ENCODE measurements at regions of chr1 and their contacts with region 1.

Region 1: DNA sequence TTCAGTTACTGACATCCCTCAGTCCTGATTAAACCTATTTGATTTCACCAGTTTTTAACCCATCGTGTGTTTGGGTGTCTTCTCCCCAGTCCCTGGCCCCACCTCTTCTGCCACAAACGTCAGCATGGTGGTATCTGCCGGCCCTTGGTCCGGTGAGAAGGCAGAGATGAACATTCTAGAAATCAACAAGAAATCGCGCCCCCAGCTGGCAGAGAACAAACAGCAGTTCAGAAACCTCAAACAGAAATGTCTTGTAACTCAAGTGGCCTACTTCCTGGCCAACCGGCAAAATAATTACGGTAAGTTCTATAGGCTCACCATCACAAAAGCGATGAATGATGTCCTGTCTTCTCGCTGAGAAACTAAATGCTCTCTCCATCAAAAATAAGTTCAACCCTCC is 28.7 kb downstream of the NBPF3 start:
- DNase-seq: peak; percentile 72
- ATAC-seq: no peak
- H3K4me3 Mint-ChIP-seq: no peak overlapping the region
- H3K27ac Mint-ChIP-seq: no peak overlapping the region; the same call in 1 of the 2 replicates
- H3K4me1 Mint-ChIP-seq: peaks cover 52% of the 10 kb centered on the region
- H3K27me3 Mint-ChIP-seq: no peaks in the 10 kb centered on the region
- CTCF ChIP-seq: peak; percentile 58

Region 2: DNA sequence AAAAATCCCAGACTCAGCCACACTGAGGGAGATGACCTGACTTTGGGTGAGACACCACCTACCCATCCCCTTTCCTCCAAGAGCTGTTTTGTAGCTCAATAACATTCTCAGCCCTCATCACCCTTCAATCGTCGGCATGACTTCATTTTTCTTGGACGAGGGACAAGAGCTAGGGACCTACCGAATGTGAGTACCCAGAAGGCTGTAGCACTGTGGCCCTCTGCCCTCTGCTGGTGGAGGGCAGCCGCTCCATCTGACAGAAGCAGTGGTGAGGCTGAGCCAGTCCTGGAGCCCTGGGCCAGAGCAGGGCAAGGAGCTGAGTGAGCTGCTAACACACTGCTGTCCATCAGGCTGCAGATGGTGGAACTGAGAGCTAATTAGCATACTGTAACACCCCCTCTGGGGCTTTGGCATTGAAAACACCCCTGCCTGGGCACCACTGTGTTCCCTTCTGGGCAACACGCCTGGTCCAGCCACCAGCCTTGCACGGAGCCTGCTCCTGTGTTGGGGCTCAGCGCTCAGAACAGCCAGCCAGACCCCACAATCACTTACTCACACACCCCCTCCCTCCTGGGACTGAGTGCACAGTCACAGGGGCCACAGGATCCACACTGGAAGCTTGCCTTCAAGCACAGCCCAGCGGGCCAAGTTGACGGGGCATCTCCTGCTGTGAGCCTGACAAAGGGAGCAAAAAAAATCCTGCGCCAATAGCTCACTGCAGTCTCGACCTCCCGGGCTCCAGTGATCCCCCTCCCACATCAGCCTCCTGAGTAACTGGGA is 22.4 kb after region 1 on chr1:
- CTCF ChIA-PET with region 1: interaction called, 10 read pairs
- POLR2A ChIA-PET with region 1: no interaction called
- DNase-seq: peak; percentile 56
- ATAC-seq: peak; percentile 87
- H3K4me3 Mint-ChIP-seq: no peak overlapping the region
- H3K27ac Mint-ChIP-seq: no peak overlapping the region
- H3K4me1 Mint-ChIP-seq: peaks cover 11% of the 10 kb centered on the region
- H3K27me3 Mint-ChIP-seq: peaks cover 3% of the 10 kb centered on the region; the same call in 1 of the 2 replicates
- CTCF ChIP-seq: no peak

Measured in WTC11 (cell line).